ENCODE measurements at regions of chr16 and their contacts with region 1.

Region 1: DNA sequence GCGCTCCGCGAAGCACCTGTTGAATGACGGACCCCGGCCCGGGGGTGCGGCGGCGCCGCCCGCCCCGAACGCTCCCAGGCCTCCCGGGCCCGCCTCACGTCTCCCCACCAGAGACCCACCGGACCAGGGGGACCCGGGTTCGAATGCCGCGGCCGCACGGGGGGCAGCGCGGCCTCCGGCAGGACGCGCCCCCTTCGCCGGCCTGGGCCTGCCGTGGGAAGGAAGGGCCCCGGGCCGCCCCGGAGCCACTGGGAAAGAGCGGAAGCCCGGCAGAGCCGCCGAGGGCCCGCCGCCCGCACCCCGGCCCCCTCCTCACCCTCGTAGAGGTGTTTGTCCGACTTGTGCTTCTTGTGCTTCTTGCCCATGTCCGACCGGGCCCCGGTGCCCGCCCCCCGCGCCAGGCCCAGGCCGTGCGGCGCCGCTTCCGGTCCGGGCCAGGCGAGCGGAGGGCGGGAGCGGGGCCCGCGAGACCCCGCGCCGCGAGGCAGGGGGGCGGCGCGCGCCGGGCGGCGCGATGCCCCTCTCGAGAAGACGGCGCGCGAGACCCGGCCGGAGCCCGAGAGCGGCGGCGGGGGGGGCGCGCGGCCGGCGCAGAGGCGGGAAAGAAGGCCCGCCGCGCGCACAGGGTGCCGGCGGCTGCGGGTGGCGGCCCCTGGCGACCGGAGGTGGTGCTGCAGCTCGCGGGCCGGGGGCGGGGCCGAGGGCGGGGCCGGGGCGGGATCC is at the start of gene BRD7:
- DNase-seq: peak; percentile 58 to 87 (median 72)
- H3K4me3 ChIP-seq: peak within 1 kb of the TSS; percentile 77
- H3K27ac ChIP-seq: peak within 1 kb of the TSS in 1 of 2 donors; percentile 46
- H3K4me1 ChIP-seq: peaks cover 2% of the 10 kb centered on the region
- H3K27me3 ChIP-seq: no peaks in the 10 kb centered on the region
- CTCF ChIP-seq: peak in 2 of 3 donors; percentile 14 to 31
- EP300 ChIP-seq: no peak
- POLR2A ChIP-seq: no peak
- total RNA-seq, gene BRD7: 30.0 to 58.7 (median 53.5) TPM

Region 2: DNA sequence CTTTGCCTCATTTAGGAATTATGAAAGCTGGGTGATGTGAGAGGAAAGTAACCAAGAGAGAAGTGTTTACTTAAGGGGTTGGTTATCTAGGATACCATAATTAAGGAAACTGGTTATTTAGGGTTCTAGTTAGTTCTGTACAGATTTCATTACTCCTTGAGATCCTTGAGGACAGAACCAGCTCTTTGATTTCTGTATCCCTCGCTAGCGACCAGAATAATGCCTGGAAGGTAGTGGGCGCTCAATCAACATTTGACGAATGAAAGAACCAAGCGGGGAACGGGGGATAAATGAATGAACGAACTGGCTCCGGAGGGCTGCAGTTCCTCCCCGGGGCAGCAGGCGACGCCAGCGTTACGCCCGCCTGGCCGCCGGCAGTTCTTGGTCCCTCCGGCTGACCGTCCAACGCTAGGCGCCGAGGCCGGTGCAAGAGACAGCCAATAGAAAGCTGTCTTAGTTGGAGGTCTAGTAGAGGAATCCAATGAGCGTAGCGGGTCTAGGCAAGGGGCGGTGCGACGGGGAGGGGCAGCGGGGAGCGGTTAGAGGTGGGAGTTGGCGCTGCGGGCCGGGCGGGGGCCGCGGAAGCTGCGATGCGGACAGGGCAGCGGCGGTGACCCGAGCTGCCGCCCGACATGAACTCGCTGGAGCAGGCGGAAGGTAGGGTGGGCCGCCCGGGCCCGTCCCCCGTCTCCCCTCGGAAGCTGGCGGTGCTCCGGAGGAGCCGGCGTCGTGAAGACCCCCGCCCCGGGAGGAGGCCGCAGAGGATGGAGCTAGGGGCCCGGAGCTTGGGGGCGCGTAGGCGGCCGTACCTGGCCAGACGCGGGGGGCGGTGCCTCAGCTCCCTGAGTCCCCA is 343.7 kb before region 1 on chr16 and contains the start of gene CNEP1R1:
- intact Hi-C with region 1: loop called in 2 of 4 experiments (anchors 5 to 10 kb)
- DNase-seq: peak; percentile 91 to 96 (median 94)
- H3K4me3 ChIP-seq: peak within 1 kb of the TSS; percentile 98
- H3K27ac ChIP-seq: peak within 1 kb of the TSS in 1 of 2 donors; percentile 73
- H3K4me1 ChIP-seq: peaks cover 4% of the 10 kb centered on the region
- H3K27me3 ChIP-seq: no peaks in the 10 kb centered on the region
- CTCF ChIP-seq: peak; percentile 99 to 100 (median 100)
- EP300 ChIP-seq: no peak
- POLR2A ChIP-seq: no peak
- total RNA-seq, gene CNEP1R1: 9.4 to 19.0 (median 13.3) TPM

Region 3: DNA sequence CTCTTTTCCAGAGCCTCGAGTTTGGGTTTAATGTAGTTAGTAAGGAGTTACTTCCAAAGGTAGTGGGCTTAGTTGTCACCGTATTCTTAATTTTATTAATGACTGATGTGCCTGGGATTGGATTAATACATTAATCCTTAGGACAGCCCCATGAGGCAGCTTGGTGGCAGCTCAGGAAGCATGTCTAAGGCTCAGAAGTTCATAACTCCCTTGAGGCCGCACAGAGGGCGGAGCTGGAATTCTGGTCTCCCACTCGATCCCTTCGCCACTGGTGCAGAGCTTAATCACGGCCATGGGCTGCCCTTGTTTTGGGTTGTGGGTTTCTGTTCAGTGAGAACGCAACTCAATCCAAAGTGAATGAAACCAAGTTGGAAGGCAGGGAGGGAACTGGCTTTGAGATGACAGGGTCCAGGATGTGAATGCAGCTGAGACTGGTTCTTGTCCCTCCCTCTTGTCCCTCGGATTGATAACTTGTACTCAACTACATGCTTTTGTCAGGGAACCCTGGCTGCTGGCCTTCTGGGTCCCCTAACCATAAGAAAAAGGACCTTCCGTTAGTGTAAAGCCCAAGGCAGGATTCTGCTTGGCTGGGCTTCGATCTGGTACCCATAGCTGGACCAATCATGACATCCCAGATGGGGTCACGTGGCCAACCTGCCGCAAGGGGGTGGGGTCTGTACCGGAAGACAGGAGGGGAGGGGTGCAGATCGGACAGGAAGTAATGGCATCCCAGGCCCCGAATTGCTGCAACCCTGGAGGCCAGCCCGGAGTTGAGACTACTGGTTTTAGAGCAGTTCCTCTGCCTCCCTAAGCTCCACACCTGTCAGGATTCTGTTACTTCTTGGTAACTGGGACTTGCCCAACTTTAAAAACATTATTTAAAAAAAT is 267.2 kb after region 1 on chr16:
- intact Hi-C with region 1: loop called in 2 of 4 experiments (anchors 10 kb)
- DNase-seq: no peak
- H3K4me3 ChIP-seq: no peak overlapping the region
- H3K27ac ChIP-seq: no peak overlapping the region
- H3K4me1 ChIP-seq: no peaks in the 10 kb centered on the region
- H3K27me3 ChIP-seq: no peaks in the 10 kb centered on the region
- CTCF ChIP-seq: no peak
- EP300 ChIP-seq: no peak
- POLR2A ChIP-seq: no peak

Region 4: DNA sequence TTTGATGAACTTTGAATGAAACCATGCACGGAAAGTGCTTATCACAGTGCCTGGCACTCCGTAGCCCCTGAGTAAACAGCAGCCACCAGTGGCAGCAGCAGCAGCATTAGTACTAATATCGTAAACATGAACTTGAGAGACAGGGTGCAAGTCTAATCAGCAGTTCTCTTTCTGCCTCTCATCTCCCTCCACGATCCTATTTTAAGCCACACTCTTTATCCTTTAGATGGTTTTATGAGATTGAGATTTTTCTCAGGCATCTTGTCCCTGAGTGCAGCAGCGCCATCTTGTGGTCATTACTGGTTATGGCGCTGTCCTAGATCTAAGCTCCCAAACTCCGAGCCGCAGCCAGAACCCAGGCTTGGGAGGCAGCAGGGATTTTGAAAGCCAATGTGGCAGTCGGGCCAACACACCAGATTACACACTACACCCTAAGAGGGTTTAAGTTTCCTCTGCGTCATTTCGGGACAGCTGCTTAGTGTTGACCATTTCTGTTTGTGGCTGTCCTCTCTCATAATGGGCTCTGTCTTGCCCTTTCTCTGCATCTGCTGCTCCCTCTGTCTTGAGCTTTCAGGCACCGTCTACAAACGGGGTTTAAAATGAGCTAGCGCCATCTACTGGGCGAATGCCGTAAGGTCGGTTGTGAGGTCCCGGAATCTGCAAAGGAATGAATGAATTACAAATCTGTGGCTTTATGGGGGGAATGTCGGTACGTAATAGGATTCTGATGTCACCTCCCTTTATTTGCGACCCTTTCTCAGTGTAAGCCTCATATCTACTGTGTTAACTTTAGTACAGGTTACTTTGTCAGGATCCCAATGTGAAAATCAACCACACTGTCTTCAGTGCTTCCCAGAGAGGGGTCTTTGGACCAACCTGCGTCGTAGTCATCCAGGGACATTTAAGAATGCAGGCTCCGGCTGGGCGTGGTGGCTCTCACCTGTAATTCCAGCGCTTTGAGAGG is 437.8 kb after region 1 on chr16:
- intact Hi-C with region 1: loop called in 1 of 4 experiments (anchors 10 kb)
- DNase-seq: peak; percentile 75 to 85 (median 82)
- H3K4me3 ChIP-seq: peak overlapping the region; percentile 28
- H3K27ac ChIP-seq: peak overlapping the region in 1 of 2 donors; percentile 48
- H3K4me1 ChIP-seq: no peaks in the 10 kb centered on the region
- H3K27me3 ChIP-seq: no peaks in the 10 kb centered on the region
- CTCF ChIP-seq: peak; percentile 62 to 86 (median 80)
- EP300 ChIP-seq: no peak
- POLR2A ChIP-seq: no peak